ENCODE measurements at regions of chr12 and their contacts with region 1.

Region 1: GRCh38 chr12:111841750-111842555 is at the start of gene MAPKAPK5:
- DNase-seq: peak; percentile 88 to 95 (median 95)
- H3K4me3 ChIP-seq: peak within 1 kb of the TSS; percentile 78 to 97 (median 90)
- H3K4me3 Mint-ChIP-seq: peak within 1 kb of the TSS; percentile 93 to 96
- H3K27ac ChIP-seq: peak within 1 kb of the TSS; percentile 51 to 97
- H3K27ac Mint-ChIP-seq: peak within 1 kb of the TSS; percentile 94 to 97 (median 96)
- H3K4me1 ChIP-seq: peaks cover 22 to 33% of the 10 kb centered on the region in 2 donors
- H3K4me1 Mint-ChIP-seq: peaks cover 39% of the 10 kb centered on the region
- H3K27me3 ChIP-seq: no peaks in the 10 kb centered on the region
- H3K27me3 Mint-ChIP-seq: no peaks in the 10 kb centered on the region
- CTCF ChIP-seq: no peak
- polyA plus RNA-seq, gene MAPKAPK5: 25.3 to 58.2 (median 28.2) TPM

Region 2: DNA sequence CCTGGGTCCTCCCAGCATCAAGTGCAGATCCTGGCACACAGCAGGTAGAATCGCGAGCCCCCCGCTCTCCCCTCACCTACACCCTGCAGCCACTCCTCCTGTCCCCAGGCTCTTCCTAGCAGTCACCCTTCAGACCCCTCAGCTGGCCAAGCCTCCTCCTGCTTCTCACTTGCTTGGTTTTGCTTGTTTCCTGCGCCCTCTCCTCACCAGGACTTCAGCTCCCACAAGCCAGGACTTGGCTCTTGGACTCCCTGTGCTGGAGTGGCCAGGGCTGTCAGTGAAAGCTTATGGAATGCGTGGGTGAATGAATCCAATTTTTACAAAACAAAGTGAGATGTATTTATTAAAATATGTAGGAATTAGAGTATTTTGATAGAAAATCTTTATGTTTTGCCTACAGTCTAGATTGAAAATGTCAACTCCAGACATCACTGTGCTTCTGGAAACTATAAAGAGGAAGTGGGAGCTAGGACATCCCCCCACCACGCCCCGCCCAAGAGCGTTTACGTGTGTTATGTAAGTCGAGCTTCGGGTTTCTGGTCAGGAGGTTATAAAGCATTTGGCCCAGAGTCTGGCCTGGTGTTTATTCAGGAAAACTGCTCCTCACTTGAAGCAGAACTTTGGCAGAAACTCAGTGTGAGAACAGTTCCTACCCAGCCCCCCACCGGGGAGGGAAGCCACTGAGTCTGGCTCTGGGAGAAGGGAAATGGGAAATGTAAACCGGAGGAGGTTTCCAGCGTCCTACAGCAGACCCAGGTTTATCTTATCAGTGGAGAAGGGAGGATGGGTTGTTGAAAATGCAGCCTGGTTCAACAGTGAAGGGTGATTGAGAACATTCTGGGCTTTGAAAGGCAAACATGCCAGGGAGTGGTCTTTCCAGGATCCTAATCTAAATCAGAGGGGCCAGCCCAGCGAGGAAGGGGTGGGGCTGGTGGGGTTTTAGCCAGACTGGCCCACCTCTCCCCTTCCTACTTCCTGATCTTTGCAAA is 66.5 kb before region 1 on chr12:
- intact Hi-C with region 1: loop called in 1 of 2 experiments (anchors 5 kb)
- DNase-seq: peak; percentile 92 to 96 (median 96)
- H3K4me3 ChIP-seq: peak overlapping the region; percentile 8 to 62 (median 13)
- H3K4me3 Mint-ChIP-seq: peak overlapping the region; percentile 64 to 89
- H3K27ac ChIP-seq: peak overlapping the region; percentile 98
- H3K27ac Mint-ChIP-seq: peak overlapping the region; percentile 99 to 100 (median 99)
- H3K4me1 ChIP-seq: peaks cover 100% of the 10 kb centered on the region in 2 donors
- H3K4me1 Mint-ChIP-seq: peaks cover 95% of the 10 kb centered on the region
- H3K27me3 ChIP-seq: no peaks in the 10 kb centered on the region
- H3K27me3 Mint-ChIP-seq: peaks cover 0 to 2% (median 0%) of the 10 kb centered on the region in 3 donors
- CTCF ChIP-seq: no peak

Region 3: DNA sequence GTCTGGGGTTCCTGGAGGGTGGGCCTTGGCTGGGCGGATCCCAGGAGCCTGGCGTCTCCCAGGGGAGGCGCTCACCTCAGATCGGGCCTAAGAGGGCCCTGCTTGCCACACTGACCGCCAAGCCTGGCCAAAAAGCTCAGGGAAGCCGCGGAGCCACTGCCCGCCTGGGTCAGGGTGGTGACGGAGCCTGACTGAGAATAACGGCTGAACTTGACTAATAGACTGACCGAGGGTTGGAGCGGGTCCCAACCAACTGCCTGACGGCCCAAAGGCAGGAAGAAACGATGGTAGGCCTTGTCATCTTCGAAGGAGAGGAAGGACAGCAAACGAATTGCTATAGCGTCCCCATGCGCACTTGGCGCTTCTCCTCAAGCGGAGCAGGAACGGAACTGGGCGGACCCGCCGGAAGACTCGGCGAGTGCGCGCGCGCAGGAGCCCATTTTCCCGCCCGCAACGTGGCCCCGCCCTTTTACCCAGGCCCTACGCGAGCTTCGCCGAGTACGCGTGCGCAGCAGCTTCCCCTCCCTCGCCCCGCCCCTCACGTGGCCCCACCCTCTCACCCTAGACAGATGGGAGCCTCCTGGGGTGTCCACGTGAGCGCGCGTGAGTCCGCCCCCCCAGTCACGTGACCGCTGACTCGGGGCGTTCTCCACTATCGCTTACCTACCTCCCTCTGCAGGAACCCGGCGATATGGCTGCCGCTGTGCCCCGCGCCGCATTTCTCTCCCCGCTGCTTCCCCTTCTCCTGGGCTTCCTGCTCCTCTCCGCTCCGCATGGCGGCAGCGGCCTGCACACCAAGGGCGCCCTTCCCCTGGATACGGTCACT is 171.0 kb after region 1 on chr12 and contains the starts of genes ERP29 and TMEM116:
- intact Hi-C with region 1: loop called in 1 of 2 experiments (anchors 5 kb)
- DNase-seq: peak; percentile 97 to 100 (median 99)
- H3K4me3 ChIP-seq: peak within 1 kb of the TSS; percentile 91 to 99 (median 94)
- H3K4me3 Mint-ChIP-seq: peak within 1 kb of the TSS; percentile 85 to 97
- H3K27ac ChIP-seq: peak within 1 kb of the TSS; percentile 89 to 92
- H3K27ac Mint-ChIP-seq: peak within 1 kb of the TSS; percentile 89 to 97 (median 96)
- H3K4me1 ChIP-seq: peaks cover 46 to 52% of the 10 kb centered on the region in 2 donors
- H3K4me1 Mint-ChIP-seq: peaks cover 44% of the 10 kb centered on the region
- H3K27me3 ChIP-seq: no peaks in the 10 kb centered on the region
- H3K27me3 Mint-ChIP-seq: peaks cover 0 to 2% (median 0%) of the 10 kb centered on the region in 3 donors
- CTCF ChIP-seq: peak; percentile 62
- polyA plus RNA-seq, gene ERP29: 158 to 207 (median 170) TPM
- polyA plus RNA-seq, gene TMEM116: 5.6 to 11.6 (median 8.3) TPM

Region 4: GRCh38 chr12:112409064-112409905 is 567.3 kb after region 1 on chr12 and contains the start of gene RPL6:
- intact Hi-C with region 1: loop called in 1 of 2 experiments (anchors 5 kb)
- DNase-seq: peak; percentile 82 to 91 (median 89)
- H3K4me3 ChIP-seq: peak within 1 kb of the TSS; percentile 86 to 100 (median 98)
- H3K4me3 Mint-ChIP-seq: peak within 1 kb of the TSS; percentile 99
- H3K27ac ChIP-seq: peak within 1 kb of the TSS; percentile 90 to 97
- H3K27ac Mint-ChIP-seq: peak within 1 kb of the TSS; percentile 95 to 100 (median 98)
- H3K4me1 ChIP-seq: peaks cover 9 to 17% of the 10 kb centered on the region in 2 donors
- H3K4me1 Mint-ChIP-seq: peaks cover 21% of the 10 kb centered on the region
- H3K27me3 ChIP-seq: no peaks in the 10 kb centered on the region
- H3K27me3 Mint-ChIP-seq: no peaks in the 10 kb centered on the region
- CTCF ChIP-seq: no peak
- polyA plus RNA-seq, gene RPL6: 201 to 1,124 (median 259) TPM

Measured in CD14-positive monocyte (primary cell).